Heart right ventricle (tissue), 16 donors: ENCODE measurements at regions of chr5 and their contacts with region 1.

Region 1: DNA sequence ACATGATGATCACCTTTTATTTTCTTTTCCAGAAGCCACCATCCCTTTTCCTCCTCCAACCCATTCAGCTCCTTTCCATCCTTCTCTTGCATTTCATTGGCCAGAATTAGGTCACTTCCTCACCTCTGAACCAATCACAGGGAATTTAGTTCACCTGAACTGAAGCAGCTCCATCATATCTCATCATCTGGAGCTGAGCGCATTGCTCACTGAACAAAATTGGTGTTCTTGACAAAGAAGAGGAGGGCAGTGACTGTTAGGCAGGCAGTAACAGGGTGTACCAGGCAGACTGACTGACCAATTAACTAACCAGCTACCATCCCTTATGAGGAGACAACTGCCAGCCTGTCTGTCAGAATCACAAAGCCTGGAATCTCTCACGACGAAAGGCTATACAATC is 1.8 kb upstream of the ZNF354A start:
- DNase-seq: no peak
- ATAC-seq: no peak
- H3K4me3 ChIP-seq: no peak overlapping the region
- H3K27ac ChIP-seq: no peak overlapping the region
- H3K4me1 ChIP-seq: peaks cover 0 to 13% (median 7%) of the 10 kb centered on the region in 9 donors
- H3K27me3 ChIP-seq: no peaks in the 10 kb centered on the region
- CTCF ChIP-seq: no peak

Region 2: GRCh38 chr5:178388386-178389025 is 343.8 kb before region 1 on chr5:
- intact Hi-C with region 1: no loop called
- DNase-seq: peak; percentile 35 to 38
- ATAC-seq: peak in 5 of 8 donors; percentile 8 to 54 (median 14)
- H3K4me3 ChIP-seq: no peak overlapping the region
- H3K27ac ChIP-seq: no peak overlapping the region
- H3K4me1 ChIP-seq: peaks cover 0 to 44% (median 12%) of the 10 kb centered on the region in 9 donors
- H3K27me3 ChIP-seq: peaks cover 0 to 53% (median 33%) of the 10 kb centered on the region in 7 donors
- CTCF ChIP-seq: no peak

Region 3: DNA sequence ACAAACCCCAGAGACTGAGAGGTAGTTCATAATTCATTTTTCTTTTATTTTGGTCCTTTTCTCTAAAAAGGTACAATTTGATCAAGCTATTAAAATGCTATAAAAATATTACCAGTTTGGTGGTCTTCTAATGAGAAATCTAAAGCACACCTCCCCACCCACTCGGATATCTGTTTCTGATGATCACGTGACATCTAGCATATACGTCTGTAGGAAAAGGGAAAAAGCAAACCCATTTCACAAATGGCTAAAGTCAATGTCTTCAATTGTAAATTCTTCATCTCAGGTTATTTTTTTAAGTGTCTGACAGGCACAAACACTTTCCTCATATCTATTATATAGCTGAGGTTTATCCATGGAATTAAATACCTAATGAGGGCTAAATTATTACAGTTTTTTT is 20.7 kb before region 1 on chr5:
- intact Hi-C with region 1: loop called in 1 of 10 experiments (anchors 1 kb)
- DNase-seq: no peak
- ATAC-seq: no peak
- H3K4me3 ChIP-seq: no peak overlapping the region
- H3K27ac ChIP-seq: no peak overlapping the region
- H3K4me1 ChIP-seq: no peaks in the 10 kb centered on the region
- H3K27me3 ChIP-seq: no peaks in the 10 kb centered on the region
- CTCF ChIP-seq: no peak

Region 4: GRCh38 chr5:178849316-178849715 is 117.0 kb after region 1 on chr5:
- intact Hi-C with region 1: loop called in 2 of 10 experiments (anchors 10 kb)
- DNase-seq: no peak
- ATAC-seq: peak in 3 of 8 donors; percentile 19 to 23 (median 21)
- H3K4me3 ChIP-seq: no peak overlapping the region
- H3K27ac ChIP-seq: no peak overlapping the region
- H3K4me1 ChIP-seq: peaks cover 0 to 11% (median 0%) of the 10 kb centered on the region in 9 donors
- H3K27me3 ChIP-seq: no peaks in the 10 kb centered on the region
- CTCF ChIP-seq: no peak

Region 5: DNA sequence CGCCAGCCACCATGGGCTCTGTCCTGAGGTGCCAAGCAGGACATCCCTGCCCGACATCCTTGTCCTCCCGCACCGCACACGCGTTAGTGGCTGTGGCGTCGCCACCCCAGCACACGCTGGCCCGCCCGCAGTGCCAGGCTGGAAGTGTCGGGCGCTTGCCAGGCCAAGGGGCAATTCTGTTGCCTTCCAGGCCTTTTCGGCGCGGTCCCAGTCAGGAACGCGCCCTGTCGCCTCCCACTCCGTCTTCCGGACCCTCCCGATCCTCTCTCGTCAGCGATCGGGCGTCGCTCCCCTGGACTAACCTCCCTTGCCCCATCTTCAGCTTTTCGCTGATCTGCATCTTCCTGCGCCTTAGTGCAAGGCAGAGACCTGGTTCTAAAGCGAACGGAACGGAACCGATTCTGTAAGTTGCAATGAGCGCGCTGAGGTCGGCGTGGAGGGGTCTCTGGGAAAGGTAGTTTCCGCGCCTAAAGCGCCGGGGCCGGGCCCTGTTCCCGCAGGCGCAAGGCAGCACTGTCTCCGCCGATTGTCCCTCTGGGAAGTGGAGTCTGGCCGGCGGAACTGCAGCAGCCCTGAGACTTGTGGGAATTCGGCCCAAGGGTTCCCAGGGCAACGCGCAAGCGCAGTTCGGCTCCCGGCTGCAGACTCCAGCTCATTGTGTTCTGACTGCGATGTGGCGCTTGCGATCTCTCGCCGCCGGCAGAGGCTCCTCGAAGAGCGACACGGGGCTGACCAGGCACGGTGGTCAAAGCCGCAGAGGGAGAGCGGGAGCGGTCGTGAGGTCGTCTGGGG is 208.5 kb after region 1 on chr5 and contains the start of gene ZNF454:
- intact Hi-C with region 1: loop called in 1 of 10 experiments (anchors 5 kb)
- DNase-seq: peak; percentile 94 to 95
- ATAC-seq: peak; percentile 98 to 99 (median 99)
- H3K4me3 ChIP-seq: peak within 1 kb of the TSS; percentile 54 to 89 (median 76)
- H3K27ac ChIP-seq: peak within 1 kb of the TSS in 9 of 10 donors; percentile 75 to 86 (median 83)
- H3K4me1 ChIP-seq: peaks cover 0 to 19% (median 11%) of the 10 kb centered on the region in 9 donors
- H3K27me3 ChIP-seq: peaks cover 0 to 19% (median 0%) of the 10 kb centered on the region in 7 donors
- CTCF ChIP-seq: peak in 1 of 9 donors; percentile 8
- total RNA-seq, gene ZNF454: 1.4 to 2.7 (median 1.7) TPM

Region 6: GRCh38 chr5:179051784-179052183 is 319.5 kb after region 1 on chr5:
- intact Hi-C with region 1: loop called in 1 of 10 experiments (anchors 10 kb)
- DNase-seq: no peak
- ATAC-seq: no peak
- H3K4me3 ChIP-seq: no peak overlapping the region
- H3K27ac ChIP-seq: no peak overlapping the region
- H3K4me1 ChIP-seq: no peaks in the 10 kb centered on the region
- H3K27me3 ChIP-seq: peaks cover 0 to 3% (median 0%) of the 10 kb centered on the region in 7 donors
- CTCF ChIP-seq: no peak

Region 7: GRCh38 chr5:179495906-179496455 is 763.7 kb after region 1 on chr5:
- intact Hi-C with region 1: loop called in 2 of 10 experiments (anchors 5 to 10 kb)
- DNase-seq: no peak
- ATAC-seq: no peak
- H3K4me3 ChIP-seq: no peak overlapping the region
- H3K27ac ChIP-seq: no peak overlapping the region
- H3K4me1 ChIP-seq: no peaks in the 10 kb centered on the region
- H3K27me3 ChIP-seq: peaks cover 0 to 34% (median 9%) of the 10 kb centered on the region in 7 donors
- CTCF ChIP-seq: no peak